A549 (cell line): ENCODE measurements at regions of chr2 and their contacts with region 1.

Region 1: DNA sequence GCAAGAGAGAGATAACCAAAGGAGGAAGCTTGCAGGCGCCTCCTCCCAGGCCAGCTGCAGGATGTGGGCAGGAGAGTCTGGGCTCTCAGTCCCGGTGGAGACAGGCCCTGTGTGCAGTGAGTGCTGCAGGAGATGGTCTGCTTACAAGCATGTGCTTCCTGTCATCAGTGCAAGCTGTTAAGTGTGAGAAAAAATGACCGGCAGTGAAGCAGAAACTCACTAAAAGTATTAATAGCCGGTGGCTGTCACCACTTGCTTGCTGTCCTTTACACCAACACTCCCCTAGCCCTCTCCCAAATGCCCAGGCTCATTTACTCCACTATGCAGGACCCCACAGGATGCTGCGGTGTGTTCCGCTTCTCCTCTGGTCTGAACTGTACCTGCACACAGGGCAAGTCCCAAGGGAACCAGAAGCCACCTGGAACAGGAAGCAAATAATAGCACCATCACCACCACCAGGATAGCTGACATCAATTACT is 435.6 kb upstream of the HS6ST1 start:
- DNase-seq: no peak
- ATAC-seq: no peak
- H3K4me3 ChIP-seq: no peak overlapping the region
- H3K27ac ChIP-seq: no peak overlapping the region
- H3K4me1 ChIP-seq: no peaks in the 10 kb centered on the region
- CTCF ChIP-seq: no peak
- EP300 ChIP-seq: no peak
- POLR2A ChIP-seq: no peak
- RAD21 ChIP-seq: no peak

Region 2: DNA sequence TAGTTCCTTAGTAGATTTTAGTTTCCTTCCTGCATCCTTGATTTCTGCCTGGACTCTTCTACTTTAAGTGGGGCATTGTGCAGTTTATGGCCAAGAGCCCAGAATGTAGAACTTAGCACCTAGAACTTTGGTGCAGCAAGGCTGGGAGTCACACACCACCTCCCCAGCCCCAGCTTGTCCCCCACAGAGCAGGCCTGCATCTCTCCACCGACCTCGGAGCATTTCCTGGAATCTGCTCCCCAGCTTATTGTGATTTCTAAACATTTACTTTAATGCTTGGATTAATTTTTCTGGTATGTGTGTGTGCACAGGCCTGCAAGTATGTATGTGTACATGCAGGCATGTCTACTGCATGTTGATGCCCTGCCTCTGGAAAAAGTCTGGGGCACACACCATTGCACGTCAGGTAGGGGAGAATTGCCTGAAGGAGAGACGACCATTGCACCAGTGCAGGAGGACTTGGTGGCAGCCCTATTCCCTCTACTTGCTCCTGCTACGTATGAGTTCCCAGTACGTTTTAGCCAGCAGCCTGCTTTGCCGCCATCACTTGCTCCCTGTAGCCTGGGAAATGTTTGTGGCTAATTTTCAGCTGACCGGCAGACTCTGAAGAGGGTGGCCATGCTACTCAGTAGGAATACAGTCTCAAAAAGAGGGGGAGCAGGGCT is 15.7 kb before region 1 on chr2:
- CTCF ChIA-PET with region 1: interaction called, 10 read pairs
- POLR2A ChIA-PET with region 1: no interaction called
- DNase-seq: no peak
- ATAC-seq: no peak
- H3K4me3 ChIP-seq: no peak overlapping the region
- H3K27ac ChIP-seq: no peak overlapping the region
- H3K4me1 ChIP-seq: 0 out of 3 replicates have a peak, but pooled peaks cover 3% of the 10 kb centered on the region
- CTCF ChIP-seq: no peak
- EP300 ChIP-seq: no peak
- POLR2A ChIP-seq: no peak
- RAD21 ChIP-seq: no peak

Region 3: DNA sequence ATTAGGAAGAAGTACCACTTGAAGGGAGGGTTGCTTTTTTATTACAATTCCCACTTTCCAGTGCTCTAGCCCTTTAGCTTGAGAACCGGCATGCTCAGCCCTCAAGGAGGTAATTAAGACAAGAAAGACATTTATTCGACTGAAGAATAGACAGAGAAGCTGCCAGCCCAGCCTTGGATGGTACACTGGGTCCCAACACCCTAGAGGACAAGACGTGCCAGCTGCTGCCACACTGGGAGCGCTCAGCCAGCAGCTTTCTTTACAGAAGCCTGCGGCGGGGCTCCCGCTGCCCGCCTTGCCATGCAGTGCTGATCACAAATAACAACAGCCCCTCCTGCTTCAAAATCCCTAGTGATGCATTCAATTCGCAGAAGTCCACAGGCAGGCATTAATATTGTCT is 478.9 kb after region 1 on chr2:
- CTCF ChIA-PET with region 1: no interaction called
- POLR2A ChIA-PET with region 1: interaction called, 12 read pairs
- DNase-seq: no peak
- ATAC-seq: no peak
- H3K4me3 ChIP-seq: no peak overlapping the region
- H3K27ac ChIP-seq: no peak overlapping the region
- H3K4me1 ChIP-seq: no peaks in the 10 kb centered on the region
- CTCF ChIP-seq: no peak
- EP300 ChIP-seq: no peak
- POLR2A ChIP-seq: no peak
- RAD21 ChIP-seq: no peak